ENCODE measurements at regions of chr10 and their contacts with region 1.

Region 1: GRCh38 chr10:60466267-60467201 is 76.9 kb upstream of the ANK3 start:
- DNase-seq: no peak
- H3K4me3 ChIP-seq: no peak overlapping the region
- H3K27ac ChIP-seq: no peak overlapping the region
- H3K4me1 ChIP-seq: peaks cover 0 to 3% (median 0%) of the 10 kb centered on the region in 4 experiments; a peak in 1 of 7 replicates
- H3K27me3 ChIP-seq: no peaks in the 10 kb centered on the region
- CTCF ChIP-seq: no peak
- EP300 ChIP-seq: no peak
- POLR2A ChIP-seq: no peak
- RAD21 ChIP-seq: no peak

Region 2: GRCh38 chr10:60456053-60456452 is 10.5 kb before region 1 on chr10:
- CTCF ChIA-PET with region 1: interaction called, 10 read pairs
- POLR2A ChIA-PET with region 1: no interaction called
- DNase-seq: peak in 1 of 2 experiments; percentile 68
- H3K4me3 ChIP-seq: no peak overlapping the region
- H3K27ac ChIP-seq: no peak overlapping the region
- H3K4me1 ChIP-seq: no peaks in the 10 kb centered on the region; a peak in 1 of 7 replicates
- H3K27me3 ChIP-seq: peaks cover 0 to 1% (median 0%) of the 10 kb centered on the region in 4 experiments; a peak in 1 of 7 replicates
- CTCF ChIP-seq: peak; percentile 49 to 64 (median 54)
- EP300 ChIP-seq: no peak
- POLR2A ChIP-seq: no peak
- RAD21 ChIP-seq: peak; percentile 45 to 58

Region 3: GRCh38 chr10:60479305-60480020 is 12.9 kb after region 1 on chr10:
- CTCF ChIA-PET with region 1: interaction called, 10 read pairs
- POLR2A ChIA-PET with region 1: no interaction called
- DNase-seq: no peak
- H3K4me3 ChIP-seq: no peak overlapping the region
- H3K27ac ChIP-seq: no peak overlapping the region
- H3K4me1 ChIP-seq: peaks cover 0 to 6% (median 1%) of the 10 kb centered on the region in 4 experiments; a peak in 2 of 7 replicates
- H3K27me3 ChIP-seq: no peaks in the 10 kb centered on the region
- CTCF ChIP-seq: no peak
- EP300 ChIP-seq: no peak
- POLR2A ChIP-seq: no peak
- RAD21 ChIP-seq: no peak

Region 4: GRCh38 chr10:60549686-60550085 is 83.2 kb after region 1 on chr10:
- CTCF ChIA-PET with region 1: no interaction called
- POLR2A ChIA-PET with region 1: no interaction called
- DNase-seq: no peak
- H3K4me3 ChIP-seq: no peak overlapping the region
- H3K27ac ChIP-seq: no peak overlapping the region
- H3K4me1 ChIP-seq: no peaks in the 10 kb centered on the region
- H3K27me3 ChIP-seq: no peaks in the 10 kb centered on the region
- CTCF ChIP-seq: peak in 2 of 3 experiments; percentile 28 to 35; a peak in 2 of 4 replicates
- EP300 ChIP-seq: no peak
- POLR2A ChIP-seq: no peak
- RAD21 ChIP-seq: peak; percentile 50 to 56